ENCODE measurements at regions of chr21 and their contacts with region 1.

Region 1: DNA sequence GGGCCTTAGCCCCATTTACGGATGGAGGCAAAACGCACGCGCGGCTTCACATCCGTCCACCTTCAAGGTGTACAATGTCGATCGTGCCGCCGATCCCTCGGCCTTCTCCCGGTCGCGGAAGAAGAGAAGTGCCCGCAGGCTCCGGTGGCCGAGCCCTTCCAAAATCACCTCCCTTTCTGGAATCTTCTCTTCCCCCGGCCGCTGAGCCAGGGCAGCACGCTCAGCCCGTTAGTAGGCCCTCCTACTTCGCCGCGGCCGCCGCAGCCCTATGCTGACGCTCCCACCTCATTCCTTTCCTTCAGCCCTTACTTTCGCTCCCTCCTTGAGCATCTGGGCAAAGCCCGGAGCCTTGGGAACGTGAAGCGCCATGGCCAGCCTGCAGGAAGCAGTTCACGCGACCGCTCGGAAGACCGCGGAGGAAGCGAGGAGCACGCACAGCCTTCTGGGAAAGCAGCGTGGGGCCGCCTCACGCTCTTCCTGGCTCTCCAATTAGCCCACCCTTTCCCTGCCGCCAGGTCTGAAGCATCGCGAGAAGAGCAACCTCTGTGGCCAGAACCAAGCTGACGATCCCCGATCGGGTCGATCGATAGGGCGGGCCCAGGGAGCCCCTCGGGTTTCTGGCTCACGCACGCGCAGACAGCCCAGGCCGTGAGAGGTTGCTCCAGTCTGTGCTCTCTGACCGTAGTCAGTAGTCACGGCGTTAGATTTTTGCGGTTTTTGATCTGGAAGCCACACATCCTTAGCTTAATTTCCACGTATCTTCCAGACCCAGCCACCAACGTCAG is at the start of gene CCT8:
- DNase-seq: peak; percentile 97 to 100 (median 99)
- H3K4me3 ChIP-seq: peak within 1 kb of the TSS; percentile 63 to 97
- H3K4me3 Mint-ChIP-seq: peak within 1 kb of the TSS; percentile 99 to 100 (median 100)
- H3K27ac ChIP-seq: peak within 1 kb of the TSS; percentile 88
- H3K27ac Mint-ChIP-seq: peak within 1 kb of the TSS; percentile 96 to 100 (median 99)
- H3K4me1 ChIP-seq: peaks cover 38% of the 10 kb centered on the region
- H3K4me1 Mint-ChIP-seq: peaks cover 24 to 63% (median 44%) of the 10 kb centered on the region in 4 donors
- H3K27me3 ChIP-seq: no peaks in the 10 kb centered on the region
- H3K27me3 Mint-ChIP-seq: no peaks in the 10 kb centered on the region
- total RNA-seq, gene CCT8: 109 to 114 TPM

Region 2: DNA sequence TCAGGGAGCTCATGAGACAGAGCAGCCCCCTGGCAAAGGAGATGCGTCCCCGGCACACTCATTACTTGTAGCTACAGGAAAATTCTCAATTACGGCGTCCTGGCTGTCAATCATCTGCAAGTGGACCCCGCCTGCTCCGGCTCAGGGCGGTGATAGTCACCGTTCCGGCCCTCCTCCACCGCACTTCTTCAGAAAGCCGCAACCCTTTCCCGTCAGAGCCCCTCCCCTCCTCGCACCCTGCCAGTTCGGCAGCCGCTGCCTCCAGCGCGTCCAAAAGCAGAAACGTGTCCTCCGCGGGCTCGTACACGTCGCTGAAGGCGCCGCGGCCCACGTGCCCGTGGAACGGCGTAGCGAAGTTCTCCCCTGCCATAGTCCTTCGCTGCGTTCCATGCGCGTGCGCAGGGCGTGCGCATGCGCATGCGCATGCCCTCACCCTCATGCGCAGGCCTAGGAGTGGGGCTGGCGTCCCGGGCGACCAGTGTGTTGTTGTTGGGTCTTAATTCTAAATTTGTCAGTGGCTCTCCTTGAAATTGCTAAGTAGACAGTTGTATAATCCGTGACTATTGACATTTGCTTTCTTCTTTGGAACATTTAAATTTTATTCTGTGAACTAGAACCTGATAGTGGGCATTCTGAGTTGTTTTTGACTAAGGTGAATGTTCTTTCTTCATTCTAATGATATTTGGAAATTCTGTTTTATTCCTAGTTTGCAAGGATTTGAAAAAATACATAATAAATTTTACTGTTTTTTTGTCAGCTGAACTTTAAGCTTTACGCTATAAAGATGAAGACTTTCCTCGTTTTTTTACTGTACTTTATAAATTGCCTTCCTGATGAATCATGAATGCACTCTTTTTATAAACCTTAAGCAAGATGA is 188.2 kb before region 1 on chr21:
- CTCF ChIA-PET with region 1: no interaction called
- POLR2A ChIA-PET with region 1: interaction called, 3 read pairs
- intact Hi-C with region 1: loop called (anchors 1 kb)
- DNase-seq: peak; percentile 92 to 95 (median 95)
- H3K4me3 ChIP-seq: peak overlapping the region; percentile 10 to 70
- H3K4me3 Mint-ChIP-seq: peak overlapping the region; percentile 92 to 98 (median 96)
- H3K27ac ChIP-seq: peak overlapping the region; percentile 87
- H3K27ac Mint-ChIP-seq: peak overlapping the region; percentile 95 to 99 (median 98)
- H3K4me1 ChIP-seq: peaks cover 20% of the 10 kb centered on the region
- H3K4me1 Mint-ChIP-seq: peaks cover 15 to 31% (median 19%) of the 10 kb centered on the region in 4 donors
- H3K27me3 ChIP-seq: no peaks in the 10 kb centered on the region
- H3K27me3 Mint-ChIP-seq: peaks cover 0 to 1% of the 10 kb centered on the region in 2 donors

Region 3: GRCh38 chr21:28904961-28905435 is 168.4 kb before region 1 on chr21:
- CTCF ChIA-PET with region 1: no interaction called
- POLR2A ChIA-PET with region 1: no interaction called
- intact Hi-C with region 1: no loop called
- DNase-seq: no peak
- H3K4me3 ChIP-seq: no peak overlapping the region
- H3K4me3 Mint-ChIP-seq: no peak overlapping the region
- H3K27ac ChIP-seq: no peak overlapping the region
- H3K27ac Mint-ChIP-seq: no peak overlapping the region
- H3K4me1 ChIP-seq: no peaks in the 10 kb centered on the region
- H3K4me1 Mint-ChIP-seq: no peaks in the 10 kb centered on the region
- H3K27me3 ChIP-seq: no peaks in the 10 kb centered on the region
- H3K27me3 Mint-ChIP-seq: no peaks in the 10 kb centered on the region

Region 4: GRCh38 chr21:29002442-29003144 is 70.8 kb before region 1 on chr21:
- CTCF ChIA-PET with region 1: interaction called, 5 read pairs
- POLR2A ChIA-PET with region 1: interaction called, 39 read pairs
- intact Hi-C with region 1: loop called (anchors 1 kb)
- DNase-seq: peak; percentile 91 to 97 (median 95)
- H3K4me3 ChIP-seq: peak overlapping the region; percentile 85 to 88
- H3K4me3 Mint-ChIP-seq: peak overlapping the region; percentile 89 to 95 (median 92)
- H3K27ac ChIP-seq: peak overlapping the region; percentile 95
- H3K27ac Mint-ChIP-seq: peak overlapping the region; percentile 98 to 99 (median 99)
- H3K4me1 ChIP-seq: peaks cover 8% of the 10 kb centered on the region
- H3K4me1 Mint-ChIP-seq: peaks cover 2 to 14% (median 6%) of the 10 kb centered on the region in 4 donors
- H3K27me3 ChIP-seq: no peaks in the 10 kb centered on the region
- H3K27me3 Mint-ChIP-seq: no peaks in the 10 kb centered on the region

Region 5: DNA sequence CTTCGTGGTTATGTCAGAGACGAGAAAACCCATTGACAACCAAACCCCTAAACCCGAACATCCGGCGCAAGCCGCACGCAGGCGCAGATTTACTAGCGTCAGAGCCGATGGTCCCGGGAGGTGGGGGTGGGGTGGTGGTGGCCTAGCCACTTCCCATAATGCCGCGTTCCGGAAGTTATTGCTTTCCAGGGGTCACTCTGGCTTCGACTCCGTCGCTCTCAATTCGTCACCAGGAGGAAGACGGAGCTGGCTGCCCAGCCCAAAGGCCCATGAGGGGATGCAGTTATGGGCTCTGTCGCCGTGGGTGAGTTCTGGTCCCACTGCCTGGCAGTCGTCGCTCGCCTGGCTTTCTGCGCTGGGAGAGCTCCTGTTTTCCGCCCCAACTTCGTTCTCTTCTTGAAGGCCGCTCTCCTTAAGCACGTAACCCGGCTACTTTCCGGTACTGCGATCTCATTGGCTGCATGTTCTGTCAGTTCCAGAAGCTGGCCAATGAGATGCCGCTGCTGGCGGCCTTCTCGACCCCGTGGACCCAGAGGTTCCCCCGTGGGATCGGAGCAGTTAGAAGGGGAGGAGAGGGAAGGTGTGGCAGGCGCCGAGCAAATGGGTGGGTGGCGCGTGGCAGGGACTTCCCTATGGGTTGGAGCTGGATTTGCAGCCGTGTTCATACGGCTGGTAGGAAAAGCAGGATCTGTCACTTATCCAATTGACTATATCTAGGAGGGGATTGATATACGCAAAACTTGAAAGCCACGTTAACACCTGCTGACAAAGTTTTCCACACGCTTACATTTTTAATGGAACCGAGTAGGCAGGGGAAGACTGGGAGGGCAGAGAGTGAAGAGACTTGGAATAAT is 48.7 kb before region 1 on chr21 and contains the start of gene USP16:
- CTCF ChIA-PET with region 1: interaction called, 4 read pairs
- POLR2A ChIA-PET with region 1: interaction called, 70 read pairs
- intact Hi-C with region 1: loop called (anchors 1 kb)
- DNase-seq: peak; percentile 96 to 98 (median 97)
- H3K4me3 ChIP-seq: peak within 1 kb of the TSS; percentile 57 to 71
- H3K4me3 Mint-ChIP-seq: peak within 1 kb of the TSS; percentile 96 to 99 (median 98)
- H3K27ac ChIP-seq: peak within 1 kb of the TSS; percentile 99
- H3K27ac Mint-ChIP-seq: peak within 1 kb of the TSS; percentile 97 to 100 (median 100)
- H3K4me1 ChIP-seq: peaks cover 59% of the 10 kb centered on the region
- H3K4me1 Mint-ChIP-seq: peaks cover 34 to 76% (median 57%) of the 10 kb centered on the region in 4 donors
- H3K27me3 ChIP-seq: no peaks in the 10 kb centered on the region
- H3K27me3 Mint-ChIP-seq: no peaks in the 10 kb centered on the region
- total RNA-seq, gene USP16: 53.5 to 57.2 TPM

Region 6: DNA sequence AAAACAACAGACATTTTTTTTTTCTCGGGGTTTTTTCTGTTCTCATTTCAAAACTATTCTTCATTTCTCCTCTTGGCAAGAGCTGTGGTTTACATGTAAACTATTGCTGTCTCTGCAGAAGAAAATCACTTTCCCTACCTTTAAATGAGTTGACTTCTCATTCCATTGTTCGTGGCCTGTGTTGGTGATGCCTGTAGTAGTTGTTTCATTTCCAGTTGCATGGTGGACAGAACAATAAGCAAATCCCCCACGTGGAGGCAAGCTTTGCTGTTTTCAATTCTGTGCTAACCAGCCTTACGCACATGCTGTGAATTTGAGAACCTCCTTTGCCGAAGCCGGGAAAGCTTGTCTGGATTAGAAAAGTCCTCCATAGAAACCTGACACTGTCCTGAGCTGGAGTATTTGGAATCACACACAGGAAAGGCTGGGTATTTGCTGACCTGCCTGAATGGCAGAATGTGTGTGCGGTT is 30.9 kb after region 1 on chr21:
- CTCF ChIA-PET with region 1: no interaction called
- POLR2A ChIA-PET with region 1: no interaction called
- intact Hi-C with region 1: no loop called
- DNase-seq: no peak
- H3K4me3 ChIP-seq: no peak overlapping the region
- H3K4me3 Mint-ChIP-seq: no peak overlapping the region
- H3K27ac ChIP-seq: no peak overlapping the region
- H3K27ac Mint-ChIP-seq: no peak overlapping the region
- H3K4me1 ChIP-seq: no peaks in the 10 kb centered on the region
- H3K4me1 Mint-ChIP-seq: no peaks in the 10 kb centered on the region
- H3K27me3 ChIP-seq: no peaks in the 10 kb centered on the region
- H3K27me3 Mint-ChIP-seq: no peaks in the 10 kb centered on the region

Region 7: DNA sequence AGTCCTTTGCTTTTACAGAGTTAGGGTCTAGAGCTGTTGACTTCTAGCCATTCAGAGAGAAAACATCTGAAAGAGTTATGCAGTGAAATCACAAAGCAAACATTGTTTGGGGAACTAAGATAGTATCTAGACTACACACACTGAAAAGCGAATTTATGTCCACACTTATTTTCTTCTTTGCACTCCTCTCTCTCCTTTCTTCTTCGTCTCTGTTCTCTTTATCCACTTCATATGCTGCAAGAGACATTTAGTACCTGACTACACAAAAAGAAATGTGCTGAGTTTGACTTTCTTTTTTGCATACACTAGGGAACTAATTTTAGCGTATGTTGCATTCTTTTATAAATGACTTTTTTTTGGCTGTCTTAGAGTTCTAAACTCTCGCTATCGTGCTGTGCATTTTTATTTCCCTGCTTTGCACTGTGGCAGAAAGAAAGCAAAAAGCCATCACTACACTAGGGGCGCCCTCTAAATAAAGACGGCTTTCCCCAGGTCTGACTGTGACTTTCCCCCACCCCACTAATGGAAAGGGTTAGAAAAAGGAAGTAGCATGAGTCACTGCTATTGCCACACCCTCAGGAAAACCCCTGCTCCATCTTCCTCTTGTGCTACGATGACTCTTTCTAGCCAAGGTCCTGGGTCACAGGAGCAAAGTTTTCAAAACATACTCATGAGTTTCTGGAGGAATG is 122.7 kb after region 1 on chr21:
- CTCF ChIA-PET with region 1: no interaction called
- POLR2A ChIA-PET with region 1: no interaction called
- intact Hi-C with region 1: loop called (anchors 2 kb)
- DNase-seq: peak; percentile 62 to 88 (median 70)
- H3K4me3 ChIP-seq: peak overlapping the region in 1 of 2 donors; percentile 42
- H3K4me3 Mint-ChIP-seq: peak overlapping the region; percentile 79 to 90 (median 84)
- H3K27ac ChIP-seq: no peak overlapping the region
- H3K27ac Mint-ChIP-seq: peak overlapping the region; percentile 84 to 96 (median 90)
- H3K4me1 ChIP-seq: peaks cover 22% of the 10 kb centered on the region
- H3K4me1 Mint-ChIP-seq: peaks cover 10 to 19% (median 17%) of the 10 kb centered on the region in 4 donors
- H3K27me3 ChIP-seq: no peaks in the 10 kb centered on the region
- H3K27me3 Mint-ChIP-seq: peaks cover 0 to 3% of the 10 kb centered on the region in 2 donors

Region 8: GRCh38 chr21:29332461-29333362 is 259.3 kb after region 1 on chr21:
- CTCF ChIA-PET with region 1: no interaction called
- POLR2A ChIA-PET with region 1: no interaction called
- intact Hi-C with region 1: no loop called
- DNase-seq: no peak
- H3K4me3 ChIP-seq: no peak overlapping the region
- H3K4me3 Mint-ChIP-seq: no peak overlapping the region
- H3K27ac ChIP-seq: no peak overlapping the region
- H3K27ac Mint-ChIP-seq: no peak overlapping the region
- H3K4me1 ChIP-seq: no peaks in the 10 kb centered on the region
- H3K4me1 Mint-ChIP-seq: peaks cover 0 to 8% (median under 1%) of the 10 kb centered on the region in 4 donors
- H3K27me3 ChIP-seq: no peaks in the 10 kb centered on the region
- H3K27me3 Mint-ChIP-seq: no peaks in the 10 kb centered on the region